ENCODE measurements at regions of chr11 and their contacts with region 1.

Region 1: DNA sequence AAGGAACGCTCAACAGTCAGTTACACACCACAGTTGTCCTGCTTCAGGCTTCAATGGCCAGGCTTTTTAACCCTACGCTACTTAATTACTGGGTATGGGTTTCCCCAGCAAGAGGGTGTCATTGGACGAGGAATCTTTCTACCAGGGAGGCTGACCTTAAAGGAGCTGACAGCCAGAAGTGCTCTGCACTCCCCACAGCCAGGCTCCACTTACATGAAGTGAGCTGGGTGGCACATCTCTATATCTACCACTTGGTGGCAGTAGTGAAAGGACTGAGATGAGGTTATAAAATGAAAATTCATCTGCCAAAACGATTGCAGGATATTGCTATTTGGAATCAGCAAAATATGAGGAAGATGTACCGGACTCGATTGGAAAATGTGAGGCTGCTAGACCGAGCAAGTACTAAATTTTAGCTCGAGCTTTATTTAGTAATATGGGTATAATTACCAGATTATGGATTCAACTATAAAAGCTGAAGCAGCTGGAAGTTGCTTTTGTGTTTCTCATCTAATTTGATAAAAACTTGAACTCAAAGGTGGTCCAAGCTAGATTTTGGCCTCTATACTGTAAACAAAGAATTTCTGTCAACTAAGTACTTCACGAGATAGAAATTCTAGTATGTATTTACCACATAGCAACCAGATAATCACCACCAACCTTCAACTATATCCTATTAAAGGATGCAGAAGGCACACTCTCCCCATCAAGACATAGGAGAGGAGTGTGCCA is 53.9 kb upstream of the CEP126 start:
- DNase-seq: no peak
- H3K4me3 ChIP-seq: no peak overlapping the region
- H3K27ac ChIP-seq: no peak overlapping the region
- H3K27me3 ChIP-seq: no peaks in the 10 kb centered on the region
- CTCF ChIP-seq: peak; percentile 83

Region 2: DNA sequence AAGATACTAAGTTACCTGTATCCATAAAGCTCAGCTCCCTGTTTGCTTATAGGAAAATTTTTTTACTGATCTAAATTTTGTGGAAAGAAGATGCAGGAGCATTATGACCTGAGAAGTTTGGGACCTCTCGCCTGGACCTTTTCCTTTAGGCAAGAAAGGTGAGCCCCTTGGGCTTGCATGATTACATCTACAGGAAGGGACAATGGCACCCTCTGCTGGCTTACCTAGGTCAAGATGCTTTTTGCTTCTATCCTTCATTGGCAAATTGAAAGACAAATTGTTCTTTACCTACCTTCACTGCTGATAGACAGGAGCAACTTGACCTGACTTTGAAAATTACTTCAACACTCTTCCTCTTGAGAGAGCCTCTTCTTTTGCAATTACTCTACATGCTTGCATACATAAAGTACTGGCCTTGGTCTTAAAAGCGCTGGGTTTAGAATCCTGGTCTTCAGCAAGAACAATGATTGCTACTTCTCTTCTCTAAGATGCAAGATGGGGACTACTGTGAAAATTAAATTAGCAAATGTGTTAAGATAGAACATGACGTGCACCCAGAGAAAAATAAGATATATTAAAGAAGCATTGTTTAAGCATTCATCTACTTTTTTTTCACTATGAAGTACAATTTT is 424.2 kb before region 1 on chr11:
- CTCF ChIA-PET with region 1: interaction called, 16 read pairs
- POLR2A ChIA-PET with region 1: no interaction called
- DNase-seq: no peak
- H3K4me3 ChIP-seq: no peak overlapping the region
- H3K27ac ChIP-seq: no peak overlapping the region
- H3K27me3 ChIP-seq: no peaks in the 10 kb centered on the region
- CTCF ChIP-seq: peak; percentile 81

Region 3: DNA sequence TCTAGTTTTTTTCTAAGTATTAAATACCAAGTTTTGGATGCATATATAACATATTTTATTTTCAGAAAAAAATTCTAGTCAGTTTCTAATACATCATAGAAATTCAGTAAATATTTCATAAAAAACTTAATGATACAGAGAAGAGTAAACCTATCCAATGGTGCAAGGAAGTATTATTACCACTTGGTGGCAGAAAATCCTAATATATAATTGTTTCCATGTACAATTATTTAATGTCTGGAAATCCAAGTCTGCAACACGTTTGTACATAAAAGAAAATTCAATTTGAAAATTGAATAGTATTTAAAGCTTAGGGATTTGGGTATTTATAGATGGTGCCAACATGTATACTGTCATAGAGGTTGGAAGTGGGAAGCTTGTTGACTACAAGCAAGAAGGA is 404.1 kb before region 1 on chr11:
- CTCF ChIA-PET with region 1: interaction called, 49 read pairs
- POLR2A ChIA-PET with region 1: no interaction called
- DNase-seq: no peak
- H3K4me3 ChIP-seq: no peak overlapping the region
- H3K27ac ChIP-seq: no peak overlapping the region
- H3K27me3 ChIP-seq: no peaks in the 10 kb centered on the region
- CTCF ChIP-seq: peak; percentile 46

Region 4: DNA sequence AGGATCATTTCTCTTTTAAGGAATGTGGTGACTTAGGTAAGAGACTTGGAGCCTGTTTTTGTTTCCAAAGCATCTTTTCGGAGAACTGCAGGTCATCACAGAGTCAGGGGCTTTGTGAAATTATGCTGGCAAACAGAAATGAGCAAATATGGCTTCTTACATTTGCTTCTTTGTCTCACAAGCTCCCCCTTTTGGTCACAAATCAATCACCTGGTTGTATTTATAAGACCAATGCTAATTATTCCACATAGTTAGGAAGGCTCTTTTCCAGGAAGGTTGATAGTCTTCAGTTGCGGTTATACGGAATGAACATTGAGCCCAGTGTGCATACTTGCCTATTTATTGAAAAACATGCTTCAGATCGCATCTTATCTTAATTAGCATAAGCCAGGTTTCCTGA is 19.4 kb after region 1 on chr11:
- CTCF ChIA-PET with region 1: interaction called, 62 read pairs
- POLR2A ChIA-PET with region 1: no interaction called
- DNase-seq: no peak
- H3K4me3 ChIP-seq: no peak overlapping the region
- H3K27ac ChIP-seq: no peak overlapping the region
- H3K27me3 ChIP-seq: no peaks in the 10 kb centered on the region
- CTCF ChIP-seq: peak; percentile 54

Region 5: DNA sequence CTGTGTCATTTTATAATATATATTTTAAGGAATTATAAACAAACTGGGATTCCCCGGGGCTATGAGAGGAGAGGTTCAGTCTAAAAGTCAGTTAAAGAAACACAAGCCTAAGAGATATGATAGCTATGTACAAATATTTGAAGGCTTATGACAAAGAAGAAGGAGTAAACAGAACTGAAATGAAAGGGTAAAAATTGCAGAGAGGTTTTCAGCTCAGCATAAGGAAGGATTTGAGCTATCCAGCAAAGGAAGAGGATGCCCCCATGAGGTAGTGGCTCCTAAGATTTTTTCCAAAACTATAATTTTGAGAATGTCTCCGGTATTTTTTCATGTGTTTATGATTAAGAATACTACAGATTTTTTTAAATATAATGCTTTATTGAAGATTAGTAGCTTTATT is 113.4 kb after region 1 on chr11:
- CTCF ChIA-PET with region 1: interaction called, 66 read pairs
- POLR2A ChIA-PET with region 1: no interaction called
- DNase-seq: peak; percentile 7
- H3K4me3 ChIP-seq: no peak overlapping the region
- H3K27ac ChIP-seq: no peak overlapping the region
- H3K27me3 ChIP-seq: no peaks in the 10 kb centered on the region
- CTCF ChIP-seq: peak; percentile 44

Region 6: GRCh38 chr11:102012946-102013345 is 152.1 kb after region 1 on chr11:
- CTCF ChIA-PET with region 1: interaction called, 370 read pairs
- POLR2A ChIA-PET with region 1: interaction called, 4 read pairs
- DNase-seq: no peak
- H3K4me3 ChIP-seq: no peak overlapping the region
- H3K27ac ChIP-seq: no peak overlapping the region
- H3K27me3 ChIP-seq: no peaks in the 10 kb centered on the region
- CTCF ChIP-seq: no peak